Left ventricle myocardium superior (tissue), 1 donor: ENCODE measurements at regions of chr9 and their contacts with region 1.

Region 1: GRCh38 chr9:137406876-137407589 is 15.9 kb downstream of the EXD3 start:
- DNase-seq: peak; percentile 85
- ATAC-seq: peak; percentile 91

Region 2: GRCh38 chr9:137320555-137321384 is 86.3 kb before region 1 on chr9:
- intact Hi-C with region 1: loop called (anchors 10 kb)
- DNase-seq: peak; percentile 36
- ATAC-seq: peak; percentile 3

Region 3: GRCh38 chr9:137502008-137502913 is 95.2 kb after region 1 on chr9:
- intact Hi-C with region 1: no loop called
- DNase-seq: no peak
- ATAC-seq: no peak

Region 4: DNA sequence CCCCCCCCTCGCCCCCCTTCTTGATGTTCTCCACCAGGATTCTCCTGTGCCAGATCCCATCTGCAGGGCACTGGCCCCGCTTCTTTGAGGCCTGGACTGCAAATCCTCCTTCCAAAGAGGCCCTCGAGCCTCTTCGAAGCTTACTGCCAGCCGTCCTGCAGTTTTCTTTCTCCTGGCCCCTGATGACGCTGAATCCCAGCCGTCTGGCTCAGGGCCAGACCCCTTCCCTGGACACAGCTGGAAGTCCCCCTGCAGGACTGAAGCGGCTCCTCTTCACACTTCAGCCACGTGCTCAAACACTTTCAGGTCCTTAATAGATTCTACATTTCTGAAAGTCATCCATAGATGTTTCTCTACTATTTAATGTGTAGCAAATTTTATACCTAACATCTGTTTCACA is 333.3 kb after region 1 on chr9:
- intact Hi-C with region 1: no loop called
- DNase-seq: peak; percentile 74
- ATAC-seq: peak; percentile 46